ENCODE measurements at regions of chr10 and their contacts with region 1.

Region 1: DNA sequence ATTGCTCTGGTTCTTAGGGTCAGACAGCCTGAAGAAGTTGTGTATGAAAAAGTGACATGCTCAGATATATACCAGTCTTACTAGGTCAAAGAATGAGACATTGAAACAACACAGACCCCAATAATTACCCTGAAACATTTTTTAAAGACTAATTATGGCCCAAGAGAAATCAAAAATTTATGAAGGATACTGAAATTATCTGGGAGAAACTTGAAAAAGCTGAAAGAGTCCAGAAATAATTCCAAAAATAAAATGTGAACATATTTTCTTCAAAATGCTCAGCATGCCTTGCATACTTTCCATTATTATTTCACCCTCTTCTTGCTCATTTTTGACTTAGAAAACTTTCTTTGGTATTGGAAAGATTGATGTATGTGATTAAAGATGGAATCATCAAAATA is 198.9 kb upstream of the CCDC6 start:
- DNase-seq: no peak
- ATAC-seq: no peak
- H3K4me3 ChIP-seq: no peak overlapping the region
- H3K27ac ChIP-seq: no peak overlapping the region
- H3K4me1 ChIP-seq: peaks cover 0 to 6% (median 0%) of the 10 kb centered on the region in 9 donors
- H3K27me3 ChIP-seq: no peaks in the 10 kb centered on the region
- CTCF ChIP-seq: no peak

Region 2: DNA sequence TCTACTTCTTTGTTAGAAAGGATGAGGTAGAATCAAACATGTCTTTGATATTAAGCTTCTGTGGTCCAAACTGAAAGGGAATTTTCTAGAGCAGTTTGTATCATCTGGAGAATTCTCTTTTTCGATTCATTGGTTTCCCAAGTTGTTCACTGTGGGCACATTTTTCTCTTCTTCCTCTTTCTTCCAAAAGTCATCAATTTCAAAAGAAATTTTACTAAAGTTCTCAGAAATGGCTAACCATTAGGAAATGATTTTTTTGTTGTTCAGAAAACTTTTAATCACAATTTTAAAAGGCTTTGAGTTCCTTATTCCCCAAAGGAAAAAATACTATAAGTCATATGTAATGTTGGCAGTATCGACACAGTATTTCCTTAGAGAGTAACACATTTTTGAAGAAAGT is 170.6 kb before region 1 on chr10:
- intact Hi-C with region 1: no loop called
- DNase-seq: no peak
- ATAC-seq: no peak
- H3K4me3 ChIP-seq: no peak overlapping the region
- H3K27ac ChIP-seq: no peak overlapping the region
- H3K4me1 ChIP-seq: no peaks in the 10 kb centered on the region
- H3K27me3 ChIP-seq: no peaks in the 10 kb centered on the region
- CTCF ChIP-seq: no peak

Region 3: GRCh38 chr10:60032723-60033122 is 72.6 kb before region 1 on chr10:
- intact Hi-C with region 1: no loop called
- DNase-seq: peak in 1 of 2 donors; percentile 45
- ATAC-seq: peak; percentile 57 to 93 (median 82)
- H3K4me3 ChIP-seq: no peak overlapping the region
- H3K27ac ChIP-seq: peak overlapping the region in 1 of 10 donors; percentile 44
- H3K4me1 ChIP-seq: peaks cover 0 to 31% (median 6%) of the 10 kb centered on the region in 9 donors
- H3K27me3 ChIP-seq: no peaks in the 10 kb centered on the region
- CTCF ChIP-seq: peak in 6 of 9 donors; percentile 49 to 67 (median 61)

Region 4: DNA sequence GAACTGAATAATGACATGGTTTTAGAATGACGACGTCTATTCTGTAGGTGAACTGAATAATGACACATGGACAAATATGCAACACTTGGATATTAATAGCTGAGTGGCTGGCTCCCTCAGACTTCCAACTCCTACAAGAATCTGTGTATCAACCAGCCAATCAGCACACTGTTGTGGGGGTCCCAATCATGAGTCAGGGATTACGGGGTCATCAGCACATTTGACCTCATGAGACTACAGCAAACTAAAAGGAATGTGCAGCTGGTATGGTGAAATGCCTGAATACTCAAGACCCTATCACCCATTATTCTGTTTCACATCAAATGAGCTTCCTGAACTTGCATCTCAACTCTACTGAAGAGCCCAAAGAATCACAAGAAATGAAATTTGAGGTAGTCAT is 91.9 kb after region 1 on chr10:
- intact Hi-C with region 1: loop called in 4 of 10 experiments (anchors 5 to 10 kb)
- DNase-seq: no peak
- ATAC-seq: no peak
- H3K4me3 ChIP-seq: no peak overlapping the region
- H3K27ac ChIP-seq: no peak overlapping the region
- H3K4me1 ChIP-seq: peaks cover 0 to 8% (median 0%) of the 10 kb centered on the region in 9 donors
- H3K27me3 ChIP-seq: no peaks in the 10 kb centered on the region
- CTCF ChIP-seq: no peak

Measured in heart right ventricle (tissue), 16 donors.